ENCODE measurements at regions of chr2 and their contacts with region 1.

Region 1: GRCh38 chr2:152635635-152636298 is 81.5 kb downstream of the PRPF40A start:
- DNase-seq: peak; percentile 46 to 55 (median 54)
- H3K4me3 ChIP-seq: no peak overlapping the region
- H3K27ac ChIP-seq: no peak overlapping the region
- H3K4me1 ChIP-seq: no peaks in the 10 kb centered on the region
- H3K27me3 ChIP-seq: no peaks in the 10 kb centered on the region

Region 2: GRCh38 chr2:152175458-152176325 is 460.1 kb before region 1 on chr2 and contains the start of gene STAM2:
- CTCF ChIA-PET with region 1: interaction called, 25 read pairs
- POLR2A ChIA-PET with region 1: no interaction called
- DNase-seq: peak; percentile 91 to 94 (median 94)
- H3K4me3 ChIP-seq: peak within 1 kb of the TSS; percentile 64 to 100 (median 92)
- H3K27ac ChIP-seq: peak within 1 kb of the TSS; percentile 95 to 98
- H3K4me1 ChIP-seq: peaks cover 6 to 35% (median 17%) of the 10 kb centered on the region in 4 experiments
- H3K27me3 ChIP-seq: no peaks in the 10 kb centered on the region

Region 3: DNA sequence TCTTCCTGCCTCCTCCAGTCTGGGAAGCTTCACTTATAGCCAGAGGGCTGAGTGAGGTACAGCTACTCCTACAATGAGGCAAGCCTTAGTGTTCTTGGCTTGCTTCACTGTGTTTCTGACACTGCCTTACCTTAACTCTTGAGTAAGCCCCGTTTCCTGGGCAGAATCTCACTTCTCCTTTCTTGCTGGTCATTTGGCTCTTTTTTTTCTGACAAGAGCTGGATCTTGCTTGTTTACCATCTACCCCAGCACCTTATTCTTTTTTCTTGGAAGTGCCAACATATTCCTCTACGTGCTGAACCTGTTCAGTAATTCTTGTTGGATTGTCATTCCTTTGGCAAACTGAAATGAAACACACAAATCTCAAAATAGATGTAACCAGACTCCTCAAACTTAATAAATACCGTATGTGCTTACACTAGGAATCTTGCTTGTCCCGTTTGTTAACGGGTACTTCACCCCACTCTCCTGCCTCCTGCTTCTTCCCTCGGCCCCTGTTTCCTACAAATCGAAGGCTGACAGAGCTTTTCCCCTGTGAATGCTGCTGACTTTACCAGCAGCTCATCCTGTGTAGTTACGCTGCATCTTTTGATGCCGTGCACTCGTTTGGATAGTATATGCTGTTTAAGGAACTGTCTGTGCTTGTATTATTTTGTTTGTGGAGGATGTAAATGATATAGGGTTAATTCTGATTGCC is 168.6 kb before region 1 on chr2:
- CTCF ChIA-PET with region 1: no interaction called
- POLR2A ChIA-PET with region 1: no interaction called
- DNase-seq: peak; percentile 8 to 46 (median 45)
- H3K4me3 ChIP-seq: no peak overlapping the region
- H3K27ac ChIP-seq: no peak overlapping the region
- H3K4me1 ChIP-seq: peaks cover 12 to 43% (median 22%) of the 10 kb centered on the region in 4 experiments
- H3K27me3 ChIP-seq: no peaks in the 10 kb centered on the region

Region 4: GRCh38 chr2:152594022-152594766 is 41.6 kb before region 1 on chr2:
- CTCF ChIA-PET with region 1: interaction called, 11 read pairs
- POLR2A ChIA-PET with region 1: no interaction called
- DNase-seq: peak; percentile 63 to 87 (median 82)
- H3K4me3 ChIP-seq: no peak overlapping the region
- H3K27ac ChIP-seq: no peak overlapping the region
- H3K4me1 ChIP-seq: peaks cover 3 to 8% (median 6%) of the 10 kb centered on the region in 4 experiments
- H3K27me3 ChIP-seq: no peaks in the 10 kb centered on the region

Region 5: DNA sequence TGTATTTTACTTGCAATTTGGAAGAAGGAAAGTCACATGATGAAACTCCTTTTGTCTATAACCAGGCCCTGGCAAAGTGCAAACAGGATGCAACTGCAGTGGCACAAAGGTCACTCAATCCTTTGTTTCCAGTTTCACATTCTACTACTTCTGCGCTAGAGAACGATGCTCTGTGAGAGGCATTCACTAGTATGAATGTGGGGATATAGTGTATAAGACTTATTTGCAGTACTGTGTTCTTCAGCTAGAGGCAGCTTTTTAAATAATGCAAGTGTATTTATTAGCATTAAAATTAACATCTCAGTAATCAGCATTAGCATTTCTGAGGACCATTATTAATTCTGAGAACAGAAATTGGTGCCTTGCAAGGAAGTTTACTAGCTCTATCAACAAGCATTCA is 12.6 kb after region 1 on chr2:
- CTCF ChIA-PET with region 1: interaction called, 17 read pairs
- POLR2A ChIA-PET with region 1: interaction called, 7 read pairs
- DNase-seq: peak in 2 of 3 donors; percentile 22 to 25
- H3K4me3 ChIP-seq: no peak overlapping the region
- H3K27ac ChIP-seq: no peak overlapping the region
- H3K4me1 ChIP-seq: no peaks in the 10 kb centered on the region
- H3K27me3 ChIP-seq: no peaks in the 10 kb centered on the region